Right ventricle myocardium inferior (tissue), 1 donor: ENCODE measurements at regions of chr15 and their contacts with region 1.

Region 1: DNA sequence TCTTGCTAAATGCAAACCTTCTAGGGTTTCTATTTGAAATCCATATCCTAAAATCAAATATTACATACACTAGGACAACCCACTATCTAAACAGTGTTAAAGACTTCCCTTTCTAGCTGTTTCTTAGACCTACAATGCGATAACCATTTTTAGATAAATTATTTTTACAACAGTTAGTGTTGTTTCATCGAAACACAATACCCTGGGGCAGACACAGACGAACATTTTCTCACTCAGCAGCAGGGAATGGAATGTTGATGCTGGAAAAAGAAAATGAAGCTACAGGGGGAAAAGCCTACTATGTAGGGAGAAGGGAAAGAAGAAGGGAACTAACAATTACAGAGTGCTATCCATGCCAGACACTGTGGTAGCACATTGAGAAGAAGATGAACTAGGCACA is 6.0 kb upstream of the HERC1 start:
- DNase-seq: no peak
- ATAC-seq: no peak

Region 2: GRCh38 chr15:63858880-63859279 is 19.2 kb after region 1 on chr15:
- intact Hi-C with region 1: loop called (anchors 2 kb)
- DNase-seq: no peak
- ATAC-seq: peak; percentile 51

Region 3: GRCh38 chr15:63905558-63906265 is 66.0 kb after region 1 on chr15:
- intact Hi-C with region 1: no loop called
- DNase-seq: no peak
- ATAC-seq: no peak